ENCODE measurements at regions of chr10 and their contacts with region 1.

Region 1: DNA sequence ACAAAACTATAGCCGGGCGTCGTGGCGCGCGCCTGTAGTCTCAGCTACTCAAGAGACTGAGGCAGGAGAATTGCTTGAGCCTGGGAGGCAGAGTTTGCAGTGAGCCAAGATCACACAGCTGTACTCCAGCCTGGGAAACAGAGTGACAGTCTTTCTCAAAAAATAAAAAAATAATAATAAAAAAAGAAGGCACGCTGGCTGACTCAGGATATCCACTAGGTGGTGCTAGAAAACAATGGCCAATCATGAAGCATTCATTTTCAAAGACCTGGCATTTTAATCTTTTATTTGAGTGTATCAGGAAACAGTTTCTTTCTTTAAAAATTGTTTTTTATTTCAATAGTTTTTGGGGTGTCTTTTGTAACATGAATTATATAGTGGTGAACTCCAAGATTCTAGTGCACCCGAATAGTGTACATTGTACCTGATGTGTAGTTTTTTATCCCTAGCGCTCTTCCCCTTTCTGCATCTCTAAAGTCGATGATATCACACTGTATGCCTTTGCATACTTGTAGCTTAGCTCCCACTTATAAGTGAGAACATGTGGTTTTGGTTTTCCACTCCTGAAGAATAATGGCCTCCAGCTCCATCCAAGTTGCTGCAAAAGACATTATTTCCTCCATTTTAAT is 88.6 kb downstream of the LYZL1 start:
- DNase-seq: peak; percentile 42
- ATAC-seq: peak; percentile 49; the same call in 1 of the 2 replicates
- H3K4me3 ChIP-seq: no peak overlapping the region
- H3K27ac ChIP-seq: no peak overlapping the region
- H3K4me1 ChIP-seq: peaks cover 3% of the 10 kb centered on the region; the same call in 1 of the 2 replicates
- H3K27me3 ChIP-seq: peaks cover 21% of the 10 kb centered on the region
- CTCF ChIP-seq: peak; percentile 88
- POLR2A ChIP-seq: no peak
- RAD21 ChIP-seq: peak; percentile 72

Region 2: GRCh38 chr10:29443745-29444523 is 66.5 kb after region 1 on chr10:
- CTCF ChIA-PET with region 1: no interaction called
- POLR2A ChIA-PET with region 1: no interaction called
- dilution Hi-C with region 1: no loop called
- in situ Hi-C with region 1: no loop called
- intact Hi-C with region 1: loop called (anchors 1 kb)
- DNase-seq: peak; percentile 25
- ATAC-seq: peak; percentile 36; the same call in 1 of the 2 replicates
- H3K4me3 ChIP-seq: no peak overlapping the region
- H3K27ac ChIP-seq: no peak overlapping the region
- H3K4me1 ChIP-seq: peaks cover 4% of the 10 kb centered on the region
- H3K27me3 ChIP-seq: no peaks in the 10 kb centered on the region
- CTCF ChIP-seq: no peak
- POLR2A ChIP-seq: no peak
- RAD21 ChIP-seq: no peak

Region 3: GRCh38 chr10:29455095-29455494 is 77.6 kb after region 1 on chr10:
- CTCF ChIA-PET with region 1: no interaction called
- POLR2A ChIA-PET with region 1: no interaction called
- dilution Hi-C with region 1: no loop called
- in situ Hi-C with region 1: no loop called
- intact Hi-C with region 1: no loop called
- DNase-seq: no peak
- ATAC-seq: no peak
- H3K4me3 ChIP-seq: no peak overlapping the region
- H3K27ac ChIP-seq: no peak overlapping the region
- H3K4me1 ChIP-seq: peaks cover 3% of the 10 kb centered on the region; the same call in 1 of the 2 replicates
- H3K27me3 ChIP-seq: no peaks in the 10 kb centered on the region
- CTCF ChIP-seq: no peak
- POLR2A ChIP-seq: no peak
- RAD21 ChIP-seq: no peak

Region 4: GRCh38 chr10:29496341-29497162 is 119.1 kb after region 1 on chr10:
- CTCF ChIA-PET with region 1: no interaction called
- POLR2A ChIA-PET with region 1: no interaction called
- dilution Hi-C with region 1: no loop called
- in situ Hi-C with region 1: no loop called
- intact Hi-C with region 1: loop called (anchors 1 kb)
- DNase-seq: peak; percentile 61
- ATAC-seq: peak; percentile 99
- H3K4me3 ChIP-seq: no peak overlapping the region
- H3K27ac ChIP-seq: no peak overlapping the region
- H3K4me1 ChIP-seq: peaks cover 2% of the 10 kb centered on the region; the same call in 1 of the 2 replicates
- H3K27me3 ChIP-seq: no peaks in the 10 kb centered on the region
- CTCF ChIP-seq: peak; percentile 94
- POLR2A ChIP-seq: no peak
- RAD21 ChIP-seq: peak; percentile 88

Measured in IMR-90 (cell line).